Activated CD4-positive, alpha-beta T cell treated with anti-CD3 and anti-CD28 coated beads, Interleukin-2, amount 10 ng/mL, durations not matched to agents 24 days and 14 days (primary cell): ENCODE measurements at regions of chr10 and their contacts with region 1.

Region 1: GRCh38 chr10:69123747-69124562 is at the start of gene VPS26A:
- DNase-seq: peak; percentile 100
- H3K4me3 Mint-ChIP-seq: peak within 1 kb of the TSS; percentile 96
- H3K27ac Mint-ChIP-seq: peak within 1 kb of the TSS; percentile 94
- H3K4me1 Mint-ChIP-seq: peaks cover 22% of the 10 kb centered on the region
- H3K27me3 Mint-ChIP-seq: peaks cover 3% of the 10 kb centered on the region
- total RNA-seq, gene VPS26A: 29.2 and 30.8 TPM in 2 replicates

Region 2: DNA sequence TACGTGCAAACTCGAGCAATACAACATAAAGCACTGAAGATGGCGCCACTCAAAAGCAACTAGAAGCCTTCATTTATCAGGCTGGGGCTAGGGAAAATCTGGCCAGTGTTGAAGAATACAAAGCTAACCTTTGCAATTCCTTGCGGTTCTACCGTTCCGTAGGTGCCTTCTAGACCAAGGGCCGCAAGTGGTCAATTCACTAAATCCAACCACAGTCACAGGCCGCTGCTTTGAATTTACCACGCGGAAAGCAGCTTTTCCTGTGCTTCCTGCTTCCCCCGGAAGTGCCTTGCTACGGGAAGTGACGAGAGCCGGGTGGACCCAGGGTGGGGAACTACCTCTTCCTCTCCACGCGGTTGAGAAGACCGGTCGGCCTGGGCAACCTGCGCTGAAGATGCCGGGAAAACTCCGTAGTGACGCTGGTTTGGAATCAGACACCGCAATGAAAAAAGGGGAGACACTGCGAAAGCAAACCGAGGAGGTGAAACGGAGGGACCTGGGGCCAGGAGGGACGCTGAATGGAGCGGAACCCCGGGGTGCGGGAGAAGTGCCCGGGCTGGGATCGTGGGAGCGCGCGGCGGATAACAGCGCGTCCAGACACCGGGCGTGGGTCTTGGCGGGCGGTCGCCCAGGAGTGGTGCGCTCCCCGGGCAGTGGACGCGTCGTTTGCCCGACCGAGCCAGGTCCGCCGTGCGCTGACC is 168.0 kb before region 1 on chr10 and contains the start of gene DDX21:
- intact Hi-C with region 1: loop called (anchors 1 kb)
- DNase-seq: peak; percentile 97
- H3K4me3 Mint-ChIP-seq: peak within 1 kb of the TSS; percentile 93
- H3K27ac Mint-ChIP-seq: peak within 1 kb of the TSS; percentile 99
- H3K4me1 Mint-ChIP-seq: peaks cover 26% of the 10 kb centered on the region
- H3K27me3 Mint-ChIP-seq: no peaks in the 10 kb centered on the region
- total RNA-seq, gene DDX21: 284 and 286 TPM in 2 replicates

Region 3: GRCh38 chr10:68988530-68989316 is 135.2 kb before region 1 on chr10 and contains the start of gene KIFBP:
- intact Hi-C with region 1: loop called (anchors 1 kb)
- DNase-seq: peak; percentile 95
- H3K4me3 Mint-ChIP-seq: peak within 1 kb of the TSS; percentile 89
- H3K27ac Mint-ChIP-seq: peak within 1 kb of the TSS; percentile 91
- H3K4me1 Mint-ChIP-seq: peaks cover 41% of the 10 kb centered on the region
- H3K27me3 Mint-ChIP-seq: no peaks in the 10 kb centered on the region
- total RNA-seq, gene KIFBP: 15.0 TPM in 2 replicates

Region 4: DNA sequence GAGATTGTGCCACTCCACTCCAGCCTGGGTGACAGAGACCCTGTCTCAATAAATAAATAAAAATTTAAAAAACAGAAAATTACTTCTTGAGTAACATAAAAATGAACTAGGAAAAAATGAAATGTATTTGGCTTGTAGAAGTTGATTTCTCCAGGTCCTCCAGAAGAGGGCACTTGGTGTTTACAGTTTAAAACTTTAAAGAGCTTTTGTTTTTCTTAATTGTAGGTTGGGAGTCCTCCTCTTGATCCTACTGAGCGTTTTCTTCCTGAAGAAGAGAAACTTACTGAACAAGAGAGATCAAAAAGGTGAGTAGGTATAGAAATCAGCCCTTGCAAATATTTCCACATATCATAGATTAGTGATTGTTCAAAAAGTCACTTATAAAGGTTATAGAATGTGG is 119.1 kb before region 1 on chr10:
- intact Hi-C with region 1: loop called (anchors 1 kb)
- DNase-seq: peak; percentile 66
- H3K4me3 Mint-ChIP-seq: no peak overlapping the region
- H3K27ac Mint-ChIP-seq: no peak overlapping the region
- H3K4me1 Mint-ChIP-seq: peaks cover 2% of the 10 kb centered on the region
- H3K27me3 Mint-ChIP-seq: no peaks in the 10 kb centered on the region

Region 5: DNA sequence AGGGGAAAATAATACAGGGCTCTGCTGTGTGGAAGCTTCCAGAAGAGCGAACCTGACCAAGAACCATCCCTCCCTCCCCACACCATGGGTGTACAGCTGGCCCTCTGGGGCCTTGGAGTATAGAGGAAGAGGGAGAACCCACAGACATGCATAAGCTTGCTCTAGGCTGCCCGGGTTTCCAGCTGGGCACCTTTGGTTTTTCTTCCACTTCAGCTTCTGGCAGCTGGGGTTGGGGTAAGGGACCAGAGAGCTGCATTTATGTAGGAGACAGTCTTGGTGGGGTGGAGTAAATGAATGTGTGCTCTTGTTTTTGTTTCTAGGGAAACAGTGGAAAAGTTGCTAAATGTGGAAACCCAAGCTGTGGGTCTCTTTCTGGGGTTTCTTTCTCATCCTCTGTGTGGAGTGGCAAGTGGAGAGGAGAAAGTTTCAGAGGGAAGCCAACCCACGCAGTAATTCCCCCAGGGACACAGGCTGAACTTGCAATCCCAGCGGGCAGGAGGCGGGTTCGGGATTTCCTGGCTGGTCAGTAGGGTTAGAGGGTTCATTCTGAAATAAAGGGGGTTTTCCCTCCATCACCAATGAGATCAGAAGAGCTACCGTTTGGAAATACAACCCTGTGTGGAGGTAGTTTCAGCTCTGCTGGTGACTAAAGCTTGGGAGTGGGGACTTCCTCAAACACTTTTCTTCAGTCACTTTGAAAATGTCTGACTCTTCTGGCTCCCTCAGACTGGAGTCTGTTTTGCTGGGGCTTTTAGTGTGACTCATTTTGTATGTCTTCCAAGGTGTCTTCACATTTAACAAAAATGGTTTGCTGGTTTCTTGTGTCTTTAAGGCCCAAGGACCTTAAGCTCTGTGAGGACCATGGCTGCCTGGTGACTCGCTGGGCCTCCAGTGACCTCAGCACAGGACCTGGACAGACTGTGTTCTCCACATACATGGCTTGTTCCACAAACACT is 58.3 kb before region 1 on chr10:
- intact Hi-C with region 1: loop called (anchors 2 kb)
- DNase-seq: peak; percentile 79
- H3K4me3 Mint-ChIP-seq: peak overlapping the region; percentile 82
- H3K27ac Mint-ChIP-seq: peak overlapping the region; percentile 99
- H3K4me1 Mint-ChIP-seq: peaks cover 40% of the 10 kb centered on the region
- H3K27me3 Mint-ChIP-seq: no peaks in the 10 kb centered on the region

Region 6: GRCh38 chr10:69179743-69180524 is 56.0 kb after region 1 on chr10 and contains the start of gene SUPV3L1:
- intact Hi-C with region 1: loop called (anchors 1 kb)
- DNase-seq: peak; percentile 96
- H3K4me3 Mint-ChIP-seq: peak within 1 kb of the TSS; percentile 88
- H3K27ac Mint-ChIP-seq: peak within 1 kb of the TSS; percentile 99
- H3K4me1 Mint-ChIP-seq: peaks cover 25% of the 10 kb centered on the region
- H3K27me3 Mint-ChIP-seq: no peaks in the 10 kb centered on the region
- total RNA-seq, gene SUPV3L1: 58.3 and 63.9 TPM in 2 replicates

Region 7: GRCh38 chr10:69408318-69409175 is 284.6 kb after region 1 on chr10:
- intact Hi-C with region 1: loop called (anchors 2 kb)
- DNase-seq: peak; percentile 96
- H3K4me3 Mint-ChIP-seq: peak overlapping the region; percentile 80
- H3K27ac Mint-ChIP-seq: peak overlapping the region; percentile 90
- H3K4me1 Mint-ChIP-seq: peaks cover 20% of the 10 kb centered on the region
- H3K27me3 Mint-ChIP-seq: no peaks in the 10 kb centered on the region